Common myeloid progenitor, CD34-positive (primary cell): ENCODE measurements at regions of chr9 and their contacts with region 1.

Region 1: DNA sequence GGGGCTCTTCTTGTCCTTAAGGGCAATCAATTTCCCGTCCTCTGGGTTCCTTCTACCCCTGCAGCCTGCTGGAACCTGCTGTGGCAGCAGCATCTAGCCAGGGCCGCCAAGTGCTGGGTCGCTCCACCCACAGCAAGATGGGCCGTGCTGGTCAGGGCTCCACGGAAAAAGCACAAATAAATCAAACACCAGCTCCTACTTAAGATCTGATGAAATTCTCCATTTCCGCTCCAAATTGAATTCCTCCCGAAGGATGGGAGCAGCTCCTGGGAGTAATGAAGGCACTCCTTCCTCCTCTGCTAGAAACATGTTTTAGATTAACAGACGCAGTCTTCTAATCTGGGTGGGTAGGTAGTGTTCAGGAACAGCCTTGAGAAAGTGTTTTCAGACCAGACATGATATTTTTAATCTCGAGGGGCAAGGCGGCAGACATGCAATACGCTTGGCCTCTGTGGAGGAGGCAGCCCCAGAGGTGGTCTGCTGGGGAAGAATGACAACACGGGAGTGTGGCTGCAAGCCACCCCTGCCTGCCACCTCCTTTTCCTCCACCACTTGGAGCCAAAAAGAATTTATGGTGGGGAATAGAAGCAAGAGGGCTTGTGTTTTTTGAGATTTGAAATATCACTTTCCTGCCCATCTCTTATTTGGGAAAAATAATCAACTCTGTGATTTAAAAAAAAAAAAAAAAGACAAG is 194.0 kb downstream of the AOPEP start:
- DNase-seq: no peak
- H3K4me3 ChIP-seq: no peak overlapping the region
- H3K27ac ChIP-seq: no peak overlapping the region
- H3K4me1 ChIP-seq: peaks cover 0 to 5% (median 2%) of the 10 kb centered on the region in 4 experiments
- H3K27me3 ChIP-seq: no peaks in the 10 kb centered on the region

Region 2: GRCh38 chr9:94675008-94675881 is 245.3 kb before region 1 on chr9:
- CTCF ChIA-PET with region 1: interaction called, 57 read pairs
- POLR2A ChIA-PET with region 1: no interaction called
- DNase-seq: no peak
- H3K4me3 ChIP-seq: no peak overlapping the region
- H3K27ac ChIP-seq: no peak overlapping the region
- H3K4me1 ChIP-seq: no peaks in the 10 kb centered on the region
- H3K27me3 ChIP-seq: peaks cover 0 to 9% (median 2%) of the 10 kb centered on the region in 5 experiments

Region 3: GRCh38 chr9:94681508-94681907 is 239.0 kb before region 1 on chr9:
- CTCF ChIA-PET with region 1: interaction called, 57 read pairs
- POLR2A ChIA-PET with region 1: no interaction called
- DNase-seq: peak; percentile 64 to 79 (median 77)
- H3K4me3 ChIP-seq: no peak overlapping the region
- H3K27ac ChIP-seq: no peak overlapping the region
- H3K4me1 ChIP-seq: peaks cover 0 to 1% (median 0%) of the 10 kb centered on the region in 4 experiments
- H3K27me3 ChIP-seq: peaks cover 0 to 13% (median 2%) of the 10 kb centered on the region in 5 experiments

Region 4: GRCh38 chr9:94796687-94797086 is 123.9 kb before region 1 on chr9:
- CTCF ChIA-PET with region 1: interaction called, 10 read pairs
- POLR2A ChIA-PET with region 1: no interaction called
- DNase-seq: peak in 1 of 3 donors; percentile 13
- H3K4me3 ChIP-seq: no peak overlapping the region
- H3K27ac ChIP-seq: no peak overlapping the region
- H3K4me1 ChIP-seq: peaks cover 0 to 3% (median 0%) of the 10 kb centered on the region in 4 experiments
- H3K27me3 ChIP-seq: no peaks in the 10 kb centered on the region

Region 5: DNA sequence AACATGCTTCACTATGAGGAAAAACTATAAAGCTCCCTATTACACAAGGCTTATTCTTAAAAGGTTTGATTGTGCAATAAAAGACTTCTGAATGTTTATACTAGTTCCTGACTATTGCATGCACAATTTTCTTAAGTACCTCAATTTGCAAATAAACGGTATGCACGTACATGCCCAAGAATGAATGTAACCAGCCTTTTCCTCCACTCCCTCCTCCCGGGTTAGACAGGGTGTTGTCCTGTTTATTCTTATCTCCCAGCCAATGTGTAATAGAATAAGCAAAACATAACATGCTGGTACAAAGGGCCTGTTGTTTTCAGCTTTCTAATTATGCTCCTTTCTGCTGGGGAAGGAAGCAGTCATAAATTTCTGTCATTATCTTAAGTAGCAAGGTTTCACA is 115.0 kb before region 1 on chr9:
- CTCF ChIA-PET with region 1: interaction called, 11 read pairs
- POLR2A ChIA-PET with region 1: no interaction called
- DNase-seq: peak; percentile 25 to 73 (median 61)
- H3K4me3 ChIP-seq: peak overlapping the region in 2 of 7 experiments; percentile 13 to 39
- H3K27ac ChIP-seq: peak overlapping the region; percentile 92
- H3K4me1 ChIP-seq: peaks cover 17 to 50% (median 25%) of the 10 kb centered on the region in 4 experiments
- H3K27me3 ChIP-seq: no peaks in the 10 kb centered on the region

Region 6: DNA sequence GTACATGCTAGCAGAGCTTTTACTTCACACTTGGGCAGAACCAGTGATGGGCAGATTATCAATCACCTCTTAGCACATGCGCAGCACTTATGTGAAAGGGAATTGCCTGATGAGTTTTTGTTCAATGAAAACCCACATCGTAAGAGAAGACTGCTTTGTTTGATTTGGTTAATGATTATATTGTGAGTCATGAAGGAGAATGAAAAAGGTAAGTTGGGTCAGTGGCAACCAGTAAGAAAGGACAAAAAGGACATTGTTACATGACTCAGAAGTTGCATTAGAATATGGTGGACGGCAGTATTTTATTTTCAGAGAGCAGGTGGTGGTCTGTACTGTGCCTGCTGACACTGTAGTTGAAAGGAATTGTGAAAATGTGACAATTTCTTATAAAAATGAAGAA is 66.7 kb before region 1 on chr9:
- CTCF ChIA-PET with region 1: interaction called, 11 read pairs
- POLR2A ChIA-PET with region 1: no interaction called
- DNase-seq: no peak
- H3K4me3 ChIP-seq: no peak overlapping the region
- H3K27ac ChIP-seq: no peak overlapping the region
- H3K4me1 ChIP-seq: no peaks in the 10 kb centered on the region
- H3K27me3 ChIP-seq: no peaks in the 10 kb centered on the region

Region 7: GRCh38 chr9:95127249-95128176 is 207.0 kb after region 1 on chr9:
- CTCF ChIA-PET with region 1: interaction called, 11 read pairs
- POLR2A ChIA-PET with region 1: no interaction called
- DNase-seq: peak; percentile 61 to 76 (median 75)
- H3K4me3 ChIP-seq: peak overlapping the region in 4 of 7 experiments; percentile 13 to 71 (median 44)
- H3K27ac ChIP-seq: no peak overlapping the region
- H3K4me1 ChIP-seq: peaks cover 0 to 6% (median 1%) of the 10 kb centered on the region in 4 experiments
- H3K27me3 ChIP-seq: no peaks in the 10 kb centered on the region